Heart left ventricle (tissue), 16 donors: ENCODE measurements at regions of chr4 and their contacts with region 1.

Region 1: DNA sequence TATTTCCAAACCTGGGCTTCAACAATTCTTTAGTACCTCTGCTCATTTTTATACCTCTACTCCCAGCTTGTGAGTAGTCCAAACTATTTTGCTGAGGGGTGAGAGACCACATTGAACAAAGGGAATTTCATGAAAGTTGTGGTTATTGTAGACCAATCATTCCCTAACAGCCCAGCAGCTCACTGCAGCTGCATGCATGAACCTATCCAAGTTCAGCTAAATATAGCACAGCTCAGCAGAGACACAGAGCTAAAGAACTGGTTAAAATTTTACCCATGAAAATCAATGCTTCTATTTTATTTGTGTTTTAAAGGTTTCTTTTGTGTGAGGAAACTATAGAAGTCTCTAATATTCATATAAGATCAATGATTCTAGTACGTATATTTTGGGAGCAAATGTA is 82.7 kb downstream of the TECRL start:
- DNase-seq: no peak
- ATAC-seq: peak; percentile 57 to 76 (median 64)
- H3K4me3 ChIP-seq: no peak overlapping the region
- H3K27ac ChIP-seq: no peak overlapping the region
- H3K4me1 ChIP-seq: peaks cover 0 to 24% (median 3%) of the 10 kb centered on the region in 12 donors
- H3K27me3 ChIP-seq: no peaks in the 10 kb centered on the region
- CTCF ChIP-seq: no peak
- POLR2A ChIP-seq: no peak

Region 2: DNA sequence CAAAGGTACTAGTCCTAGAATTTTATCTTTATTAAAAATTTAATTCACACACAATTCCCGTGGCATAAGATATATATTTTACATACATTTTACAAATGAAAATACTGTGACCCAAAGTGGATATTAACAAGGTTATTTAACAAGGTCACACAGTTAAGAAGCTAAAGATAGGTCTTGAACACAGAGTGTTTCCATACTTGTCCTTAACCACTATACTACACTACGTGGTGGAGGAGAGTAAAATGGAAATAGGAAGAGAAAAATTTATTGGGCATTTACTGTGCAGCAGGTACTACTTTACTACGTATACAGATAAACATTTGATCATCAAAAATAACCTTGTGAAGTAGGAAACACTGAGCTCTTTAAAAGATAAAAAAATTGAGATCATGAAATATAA is 68.0 kb after region 1 on chr4:
- intact Hi-C with region 1: loop called in 1 of 10 experiments (anchors 2 kb)
- DNase-seq: no peak
- ATAC-seq: peak in 2 of 4 donors; percentile 55 to 56
- H3K4me3 ChIP-seq: peak overlapping the region in 1 of 12 donors; percentile 4
- H3K27ac ChIP-seq: peak overlapping the region in 8 of 12 donors; percentile 3 to 64 (median 42)
- H3K4me1 ChIP-seq: peaks cover 0 to 9% (median 0%) of the 10 kb centered on the region in 12 donors
- H3K27me3 ChIP-seq: no peaks in the 10 kb centered on the region
- CTCF ChIP-seq: no peak
- POLR2A ChIP-seq: no peak